Activated T-helper 1 cell treated with anti-CD3 and anti-CD28 coated beads, Interleukin-12 subunit alpha, Interleukin-12 subunit beta, Interleukin-2, Interleukin-4 antibody, amounts not matched to agents 30 ng/mL and 10 ng/mL and 1 ng/mL, durations not matched to agents 14 hours and 24 hours and 36 hours (primary cell): ENCODE measurements at regions of chr12 and their contacts with region 1.

Region 1: GRCh38 chr12:62603061-62603810 is 136.6 kb downstream of the MON2 start:
- DNase-seq: peak; percentile 75
- H3K4me3 Mint-ChIP-seq: peak overlapping the region; percentile 90
- H3K27ac Mint-ChIP-seq: peak overlapping the region; percentile 99
- H3K4me1 Mint-ChIP-seq: peaks cover 45% of the 10 kb centered on the region
- H3K27me3 Mint-ChIP-seq: peaks cover 4% of the 10 kb centered on the region

Region 2: GRCh38 chr12:62466594-62467491 is 136.4 kb before region 1 on chr12 and contains the start of gene MON2:
- intact Hi-C with region 1: loop called (anchors 1 kb)
- DNase-seq: peak; percentile 86
- H3K4me3 Mint-ChIP-seq: peak within 1 kb of the TSS; percentile 91
- H3K27ac Mint-ChIP-seq: peak within 1 kb of the TSS; percentile 92
- H3K4me1 Mint-ChIP-seq: peaks cover 28% of the 10 kb centered on the region
- H3K27me3 Mint-ChIP-seq: no peaks in the 10 kb centered on the region
- total RNA-seq, gene MON2: 33.1 and 40.8 TPM in 2 replicates

Region 3: GRCh38 chr12:62631471-62632410 is 28.5 kb after region 1 on chr12:
- intact Hi-C with region 1: loop called (anchors 2 kb)
- DNase-seq: no peak
- H3K4me3 Mint-ChIP-seq: peak overlapping the region; percentile 72
- H3K27ac Mint-ChIP-seq: no peak overlapping the region
- H3K4me1 Mint-ChIP-seq: no peaks in the 10 kb centered on the region
- H3K27me3 Mint-ChIP-seq: peaks cover 81% of the 10 kb centered on the region

Region 4: GRCh38 chr12:62758216-62758615 is 155.0 kb after region 1 on chr12:
- intact Hi-C with region 1: loop called (anchors 1 kb)
- DNase-seq: no peak
- H3K4me3 Mint-ChIP-seq: no peak overlapping the region
- H3K27ac Mint-ChIP-seq: no peak overlapping the region
- H3K4me1 Mint-ChIP-seq: peaks cover 36% of the 10 kb centered on the region
- H3K27me3 Mint-ChIP-seq: peaks cover 3% of the 10 kb centered on the region

Region 5: GRCh38 chr12:62799126-62799736 is 196.0 kb after region 1 on chr12:
- intact Hi-C with region 1: loop called (anchors 1 kb)
- DNase-seq: peak; percentile 42
- H3K4me3 Mint-ChIP-seq: no peak overlapping the region
- H3K27ac Mint-ChIP-seq: no peak overlapping the region
- H3K4me1 Mint-ChIP-seq: no peaks in the 10 kb centered on the region
- H3K27me3 Mint-ChIP-seq: peaks cover 8% of the 10 kb centered on the region

Region 6: GRCh38 chr12:64403707-64404469 is 1800.7 kb after region 1 on chr12 and contains the start of gene XPOT:
- intact Hi-C with region 1: loop called (anchors 2 kb)
- DNase-seq: peak; percentile 92
- H3K4me3 Mint-ChIP-seq: peak within 1 kb of the TSS; percentile 95
- H3K27ac Mint-ChIP-seq: peak within 1 kb of the TSS; percentile 99
- H3K4me1 Mint-ChIP-seq: peaks cover 20% of the 10 kb centered on the region
- H3K27me3 Mint-ChIP-seq: no peaks in the 10 kb centered on the region
- total RNA-seq, gene XPOT: 145 and 146 TPM in 2 replicates